HCT116 (cell line): ENCODE measurements at regions of chr16 and their contacts with region 1.

Region 1: DNA sequence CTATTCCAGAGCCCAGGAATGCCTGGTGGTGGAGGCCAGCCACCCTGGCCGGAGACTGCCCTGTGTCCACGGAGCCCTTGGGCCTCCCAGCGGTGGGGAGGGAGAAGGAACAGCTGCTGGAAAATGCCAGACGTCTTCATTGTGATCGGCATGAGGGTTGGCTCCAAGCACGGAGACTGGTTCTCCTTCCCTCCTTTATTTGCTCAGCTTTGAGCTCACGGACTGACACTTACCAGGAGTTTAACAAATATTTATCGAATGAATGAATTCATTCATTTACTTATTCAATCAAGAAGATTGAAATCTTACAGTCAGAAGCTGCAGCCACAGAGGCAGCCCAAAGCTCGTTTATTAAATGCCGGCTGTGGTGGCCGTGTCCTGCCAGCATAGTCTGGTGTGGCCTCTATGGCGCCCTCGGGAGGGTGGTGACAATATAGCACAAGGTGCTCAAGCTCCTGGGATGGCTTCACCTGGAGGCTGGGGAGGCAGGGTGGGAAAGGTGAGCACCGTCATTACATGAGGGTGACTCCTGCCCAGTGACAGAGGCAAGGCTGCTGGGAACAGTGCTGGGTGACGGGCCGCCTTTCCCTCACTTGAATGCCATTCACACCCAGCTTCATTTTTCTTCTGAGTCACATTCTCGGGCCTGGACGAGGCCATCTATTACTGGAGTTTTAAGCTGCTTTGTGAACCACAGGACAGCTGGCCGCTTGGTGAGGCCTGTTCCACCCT is 31.0 kb upstream of the JPH3 start:
- DNase-seq: peak; percentile 42
- ATAC-seq: peak; percentile 91
- H3K4me3 ChIP-seq: no peak overlapping the region
- H3K27ac ChIP-seq: no peak overlapping the region
- H3K4me1 ChIP-seq: peaks cover 4 to 8% of the 10 kb centered on the region in 2 experiments; a peak in 3 of 4 replicates
- H3K27me3 ChIP-seq: no peaks in the 10 kb centered on the region
- CTCF ChIP-seq: peak; percentile 74 to 84 (median 81)
- POLR2A ChIP-seq: no peak
- RAD21 ChIP-seq: peak; percentile 47; the same call in 1 of the 2 replicates

Region 2: DNA sequence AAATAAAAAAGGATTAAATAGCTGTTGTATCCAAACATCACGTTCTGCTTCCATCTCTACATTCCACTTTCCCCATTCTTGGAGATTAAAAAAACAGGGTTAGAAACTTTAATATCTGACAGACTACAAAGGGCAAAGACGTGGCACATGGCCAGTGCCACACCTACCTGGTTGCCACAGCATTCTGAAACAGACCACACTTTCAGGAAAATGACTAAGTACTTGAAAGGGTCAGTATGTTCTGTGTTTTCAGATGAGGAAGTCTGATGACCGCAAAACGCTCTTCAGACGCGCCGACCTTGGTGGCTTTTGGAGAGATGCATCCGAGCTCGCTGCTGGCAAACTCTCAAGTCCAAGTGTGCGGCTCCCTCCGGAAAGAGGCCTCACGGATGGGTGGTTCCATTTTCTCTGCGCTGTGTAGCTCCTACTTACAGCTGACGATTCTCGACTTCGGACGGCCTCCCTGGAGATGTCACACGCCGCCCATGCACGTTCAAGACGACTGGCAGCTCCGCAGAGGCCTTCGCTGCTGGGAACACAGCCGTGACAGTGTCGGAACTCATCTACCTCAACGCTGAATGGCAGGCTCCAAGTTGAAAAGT is 163.7 kb before region 1 on chr16:
- CTCF ChIA-PET with region 1: interaction called, 12 read pairs
- POLR2A ChIA-PET with region 1: no interaction called
- RAD21 ChIA-PET with region 1: no interaction called
- intact Hi-C with region 1: no loop called
- DNase-seq: peak; percentile 100
- ATAC-seq: peak; percentile 93
- H3K4me3 ChIP-seq: peak overlapping the region in 1 of 2 experiments; percentile 24; a peak in 2 of 4 replicates
- H3K27ac ChIP-seq: peak overlapping the region; percentile 12; the same call in 1 of the 2 replicates
- H3K4me1 ChIP-seq: peaks cover 24 to 42% of the 10 kb centered on the region in 2 experiments
- H3K27me3 ChIP-seq: no peaks in the 10 kb centered on the region
- CTCF ChIP-seq: no peak
- POLR2A ChIP-seq: no peak
- RAD21 ChIP-seq: peak; percentile 31; the same call in 1 of the 2 replicates

Region 3: GRCh38 chr16:87416826-87417527 is 154.3 kb before region 1 on chr16:
- CTCF ChIA-PET with region 1: interaction called, 11 read pairs
- POLR2A ChIA-PET with region 1: interaction called, 3 read pairs
- RAD21 ChIA-PET with region 1: interaction called, 4 to 5 read pairs
- intact Hi-C with region 1: loop called (anchors 5 kb)
- DNase-seq: no peak
- ATAC-seq: no peak
- H3K4me3 ChIP-seq: no peak overlapping the region
- H3K27ac ChIP-seq: no peak overlapping the region
- H3K4me1 ChIP-seq: no peaks in the 10 kb centered on the region
- H3K27me3 ChIP-seq: no peaks in the 10 kb centered on the region
- CTCF ChIP-seq: peak; percentile 70 to 87 (median 76)
- POLR2A ChIP-seq: no peak
- RAD21 ChIP-seq: peak; percentile 78

Region 4: DNA sequence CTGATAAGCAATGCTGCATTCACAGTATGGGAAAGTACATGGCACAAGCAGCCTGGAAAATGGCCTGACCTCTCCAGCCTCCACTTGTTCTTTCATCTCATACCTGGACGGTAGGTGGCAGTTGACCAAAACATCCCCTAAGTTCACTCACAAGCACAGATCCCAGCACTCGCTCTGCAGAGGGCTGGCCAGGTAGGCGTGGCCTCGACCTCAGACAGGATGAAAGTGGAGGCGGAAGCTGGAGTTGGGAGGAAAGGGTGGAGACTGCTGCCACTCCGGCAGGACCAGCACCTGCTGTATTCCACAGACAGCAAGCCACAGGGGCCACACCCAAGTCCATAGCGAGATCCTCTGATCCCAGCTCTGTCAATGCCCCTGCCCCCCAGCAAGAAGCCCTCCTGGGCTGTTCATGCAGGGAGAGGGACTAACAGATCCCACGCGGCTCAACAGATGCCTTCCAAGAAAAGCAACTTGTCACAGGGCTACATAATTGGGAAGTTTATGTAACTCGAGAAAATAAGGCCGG is 109.8 kb before region 1 on chr16:
- CTCF ChIA-PET with region 1: interaction called, 11 read pairs
- POLR2A ChIA-PET with region 1: no interaction called
- RAD21 ChIA-PET with region 1: no interaction called
- intact Hi-C with region 1: loop called (anchors 1 kb)
- DNase-seq: peak; percentile 98
- ATAC-seq: peak; percentile 90
- H3K4me3 ChIP-seq: peak overlapping the region; percentile 35 to 44
- H3K27ac ChIP-seq: no peak overlapping the region
- H3K4me1 ChIP-seq: peaks cover 48 to 61% of the 10 kb centered on the region in 2 experiments
- H3K27me3 ChIP-seq: no peaks in the 10 kb centered on the region
- CTCF ChIP-seq: peak; percentile 73 to 82 (median 79); a peak in 5 of 6 replicates
- POLR2A ChIP-seq: no peak
- RAD21 ChIP-seq: peak; percentile 73

Region 5: GRCh38 chr16:87560428-87561199 is 10.7 kb before region 1 on chr16:
- CTCF ChIA-PET with region 1: interaction called, 28 read pairs
- POLR2A ChIA-PET with region 1: interaction called, 12 read pairs
- RAD21 ChIA-PET with region 1: interaction called in 1 of 2 experiments, 4 read pairs
- intact Hi-C with region 1: loop called (anchors 1 kb)
- DNase-seq: peak; percentile 93
- ATAC-seq: peak; percentile 96
- H3K4me3 ChIP-seq: no peak overlapping the region
- H3K27ac ChIP-seq: peak overlapping the region; percentile 51; the same call in 1 of the 2 replicates
- H3K4me1 ChIP-seq: peaks cover 4 to 13% of the 10 kb centered on the region in 2 experiments; a peak in 3 of 4 replicates
- H3K27me3 ChIP-seq: no peaks in the 10 kb centered on the region
- CTCF ChIP-seq: no peak
- POLR2A ChIP-seq: no peak
- RAD21 ChIP-seq: no peak

Region 6: GRCh38 chr16:87581833-87582203 is 10.5 kb after region 1 on chr16:
- CTCF ChIA-PET with region 1: interaction called, 12 read pairs
- POLR2A ChIA-PET with region 1: no interaction called
- RAD21 ChIA-PET with region 1: no interaction called
- intact Hi-C with region 1: no loop called
- DNase-seq: peak; percentile 51
- ATAC-seq: peak; percentile 66
- H3K4me3 ChIP-seq: no peak overlapping the region
- H3K27ac ChIP-seq: no peak overlapping the region
- H3K4me1 ChIP-seq: peaks cover 12 to 22% of the 10 kb centered on the region in 2 experiments
- H3K27me3 ChIP-seq: no peaks in the 10 kb centered on the region
- CTCF ChIP-seq: no peak
- POLR2A ChIP-seq: no peak
- RAD21 ChIP-seq: no peak